Posterior vena cava (tissue), 2 donors: ENCODE measurements at regions of chr1 and their contacts with region 1.

Region 1: DNA sequence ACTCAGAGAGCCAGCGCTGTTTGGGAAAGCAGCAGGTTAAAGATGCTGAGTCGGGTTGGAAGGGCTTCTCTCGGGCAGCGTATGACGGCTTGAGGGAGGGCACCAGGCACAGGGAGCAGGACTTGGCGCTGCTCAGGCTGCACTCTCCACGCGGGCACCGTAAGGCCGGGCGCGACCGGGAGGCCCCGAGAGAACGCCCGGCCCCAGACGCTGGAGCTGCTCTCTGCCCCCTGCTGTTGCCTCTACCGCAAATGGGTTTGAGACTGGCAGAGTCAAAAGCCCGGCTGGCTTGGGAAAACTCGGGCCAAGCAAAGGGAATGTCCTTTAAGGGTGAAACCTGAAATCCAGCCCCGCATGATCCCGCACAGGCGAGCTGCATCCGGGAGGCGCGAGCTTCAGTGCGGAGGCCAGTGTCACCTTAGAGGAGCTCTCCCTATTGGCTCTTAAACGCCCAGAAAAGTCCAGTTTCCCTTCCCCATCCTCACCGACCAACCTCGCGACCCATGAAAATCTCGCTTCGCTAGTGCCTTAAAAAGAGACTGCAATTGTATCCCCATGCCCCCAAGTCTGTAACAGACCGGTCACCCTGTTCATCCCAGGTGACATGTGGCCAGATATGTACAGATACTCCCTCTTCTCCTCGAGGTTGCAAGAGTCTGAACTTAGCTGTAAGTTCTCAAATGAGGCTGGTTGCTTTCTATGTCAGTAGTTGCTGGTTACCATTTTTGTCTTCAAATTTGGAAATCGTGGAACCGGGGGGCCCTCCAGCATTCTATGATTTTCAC is 1.1 kb downstream of the PRRX1 start:
- DNase-seq: peak; percentile 85

Region 2: GRCh38 chr1:170010443-170010842 is 654.6 kb before region 1 on chr1:
- intact Hi-C with region 1: loop called in 1 of 2 experiments (anchors 5 kb)
- DNase-seq: no peak

Region 3: GRCh38 chr1:170531758-170532657 is 133.0 kb before region 1 on chr1 and contains the start of gene GORAB:
- intact Hi-C with region 1: loop called (anchors 5 kb)
- DNase-seq: peak; percentile 97
- total RNA-seq, gene GORAB: 14.4 to 14.7 TPM

Region 4: DNA sequence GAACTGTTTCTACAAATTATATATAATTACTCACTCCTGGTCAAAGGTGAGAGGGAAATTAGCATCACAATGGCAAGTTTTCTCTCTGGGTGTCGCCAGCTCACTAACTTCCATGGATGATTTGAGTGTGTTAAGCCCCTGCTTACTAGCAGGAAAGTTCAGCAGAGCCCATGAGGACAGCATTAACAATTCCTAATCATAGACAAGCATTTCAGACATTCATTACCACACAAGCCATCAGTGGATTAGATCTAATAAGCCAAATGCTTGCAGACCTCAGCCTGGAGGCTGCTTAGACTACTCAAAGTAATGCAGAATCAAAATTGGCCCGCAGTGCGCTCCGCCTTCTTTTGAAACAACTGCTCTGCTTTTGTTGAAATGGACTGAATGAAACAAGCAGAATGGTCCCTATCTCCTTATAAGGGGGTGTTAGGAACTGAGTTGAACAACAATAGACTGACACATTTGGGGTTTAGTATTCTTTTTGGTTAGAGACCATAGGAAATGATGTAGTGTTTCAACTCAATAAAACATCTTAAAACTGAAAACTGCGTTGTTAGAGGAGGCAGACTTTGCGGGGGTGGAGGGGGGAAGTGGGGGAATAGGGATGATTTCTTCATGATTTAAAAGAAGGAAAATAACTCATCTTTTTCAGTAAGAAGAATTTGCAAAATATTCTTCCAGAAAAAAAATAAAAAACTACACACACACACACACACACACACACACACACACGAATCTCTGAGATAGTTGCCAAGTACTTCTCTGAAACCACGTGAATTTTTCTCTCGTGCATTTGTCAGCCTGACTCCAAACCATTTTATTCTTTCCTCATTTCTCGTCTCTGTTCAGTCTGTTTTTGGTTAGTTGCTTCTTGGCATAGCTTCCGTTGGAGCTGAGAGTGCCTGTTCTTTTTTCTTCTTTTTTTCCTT is 78.4 kb before region 1 on chr1:
- intact Hi-C with region 1: loop called in 1 of 2 experiments (anchors 2 kb)
- DNase-seq: peak; percentile 88

Region 5: GRCh38 chr1:170765712-170766330 is 100.8 kb after region 1 on chr1:
- intact Hi-C with region 1: loop called in 1 of 2 experiments (anchors 5 kb)
- DNase-seq: no peak

Region 6: DNA sequence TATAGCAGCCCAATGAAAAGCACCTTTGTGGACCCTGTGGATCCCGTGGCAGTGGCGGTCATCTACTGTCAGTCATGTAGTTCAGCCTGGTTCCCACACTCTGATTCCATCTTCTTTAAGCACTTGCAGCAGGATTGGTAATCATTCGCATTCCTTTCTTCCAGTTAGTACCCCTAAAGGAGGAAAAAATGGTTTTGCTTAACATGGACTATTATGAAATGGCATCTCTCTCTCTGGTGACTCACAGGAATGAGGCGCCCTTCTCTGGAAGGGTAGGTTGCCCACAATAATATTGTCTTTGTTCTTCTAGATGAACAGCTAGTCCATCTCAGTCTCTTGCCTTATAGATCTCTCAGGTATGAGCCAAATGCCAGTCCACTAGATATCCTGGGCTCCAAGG is 142.4 kb after region 1 on chr1:
- intact Hi-C with region 1: no loop called
- DNase-seq: no peak

Region 7: GRCh38 chr1:171644805-171645483 is 979.9 kb after region 1 on chr1:
- intact Hi-C with region 1: loop called in 1 of 2 experiments (anchors 5 kb)
- DNase-seq: peak; percentile 87